Activated CD4-positive, alpha-beta memory T cell treated with anti-CD3 and anti-CD28 coated beads, Interleukin-2, amount 10 ng/mL, durations not matched to agents 7 days and 5 days (primary cell): ENCODE measurements at regions of chr16 and their contacts with region 1.

Region 1: GRCh38 chr16:4253394-4254150 is 11.7 kb upstream of the SRL start:
- DNase-seq: peak; percentile 100
- H3K4me3 Mint-ChIP-seq: peak overlapping the region; percentile 96
- H3K27ac Mint-ChIP-seq: peak overlapping the region; percentile 97
- H3K4me1 Mint-ChIP-seq: peaks cover 11% of the 10 kb centered on the region
- H3K27me3 Mint-ChIP-seq: no peaks in the 10 kb centered on the region

Region 2: DNA sequence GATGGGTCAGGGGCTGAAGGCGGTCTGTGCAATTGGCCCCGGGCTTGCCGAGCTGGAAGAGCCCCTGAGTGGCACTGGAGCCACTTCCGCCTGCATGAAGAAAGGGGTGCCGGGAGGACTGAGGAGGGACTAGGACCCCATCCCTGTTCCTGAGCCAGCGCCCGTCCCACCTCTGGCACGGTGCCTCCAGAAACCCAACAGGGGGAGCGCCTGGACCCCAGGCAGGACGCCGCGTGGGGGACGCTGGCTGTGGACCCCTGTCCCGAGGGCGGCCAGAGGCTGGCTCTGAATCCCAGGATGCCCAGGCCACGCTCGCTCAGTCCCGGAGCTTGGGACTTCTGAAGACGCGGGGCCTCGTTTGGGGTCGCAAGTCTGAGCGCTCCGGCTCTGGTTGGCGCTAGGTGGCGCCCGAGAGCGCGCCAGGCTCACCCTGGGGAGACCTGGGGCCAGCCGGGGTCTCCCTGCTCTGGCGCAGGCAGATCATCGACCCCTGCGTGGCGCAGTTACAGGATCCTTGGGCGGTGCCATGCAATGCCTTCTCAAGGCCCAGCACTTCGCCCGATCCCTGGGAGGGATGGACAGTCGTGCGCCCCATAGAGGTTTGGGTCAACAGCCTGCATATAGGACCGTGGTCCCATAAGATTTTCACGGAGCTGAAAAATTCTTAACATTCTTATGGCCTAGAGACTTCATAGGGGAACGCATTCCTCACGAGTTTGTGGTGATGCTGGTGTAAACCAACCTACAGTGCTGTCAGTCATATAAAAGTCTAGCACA is 314.5 kb before region 1 on chr16:
- CTCF ChIA-PET with region 1: interaction called, 38 read pairs
- POLR2A ChIA-PET with region 1: no interaction called
- DNase-seq: peak; percentile 62
- H3K4me3 Mint-ChIP-seq: no peak overlapping the region
- H3K27ac Mint-ChIP-seq: no peak overlapping the region
- H3K4me1 Mint-ChIP-seq: no peaks in the 10 kb centered on the region
- H3K27me3 Mint-ChIP-seq: no peaks in the 10 kb centered on the region

Region 3: GRCh38 chr16:3983081-3983520 is 270.5 kb before region 1 on chr16:
- CTCF ChIA-PET with region 1: interaction called, 43 read pairs
- POLR2A ChIA-PET with region 1: no interaction called
- DNase-seq: peak; percentile 54
- H3K4me3 Mint-ChIP-seq: no peak overlapping the region
- H3K27ac Mint-ChIP-seq: no peak overlapping the region
- H3K4me1 Mint-ChIP-seq: no peaks in the 10 kb centered on the region
- H3K27me3 Mint-ChIP-seq: no peaks in the 10 kb centered on the region

Region 4: DNA sequence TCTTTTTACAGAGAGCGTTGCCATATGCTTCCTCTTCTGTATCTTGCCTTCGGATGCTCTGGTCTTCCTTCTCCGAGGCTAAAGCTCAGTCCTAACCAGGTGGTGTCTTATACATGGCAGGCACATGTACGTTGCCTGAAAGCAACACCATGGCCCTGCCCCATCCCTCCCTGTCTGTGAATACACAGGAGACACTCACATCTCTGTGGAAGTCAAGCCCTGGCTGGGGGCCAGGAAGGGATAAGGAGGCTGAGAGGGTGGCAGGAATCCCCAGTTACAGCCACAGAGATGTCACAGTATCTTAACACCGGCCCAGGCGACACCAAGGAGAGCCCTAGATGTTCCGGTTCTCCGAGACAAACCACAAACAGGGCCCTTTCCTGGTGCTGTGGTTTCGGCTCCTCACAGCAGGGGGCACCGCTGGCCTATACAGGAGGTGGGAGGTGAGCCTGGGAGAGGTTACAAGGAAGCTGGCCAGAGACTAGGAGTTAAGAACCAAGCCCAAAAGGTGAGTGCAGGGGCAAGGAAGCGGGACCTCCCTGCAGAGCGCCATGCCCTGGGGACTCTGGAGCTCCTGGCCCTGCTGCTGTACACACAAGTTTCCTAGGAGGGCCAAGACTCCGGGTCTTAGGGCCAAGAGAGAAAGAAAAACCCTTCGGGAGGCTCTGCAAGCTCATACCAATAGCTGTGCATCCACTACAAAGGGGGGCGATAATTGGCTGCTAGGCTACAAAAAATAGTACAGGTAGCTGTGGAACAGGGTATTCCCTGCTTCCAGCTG is 53.4 kb before region 1 on chr16:
- CTCF ChIA-PET with region 1: interaction called, 11 read pairs
- POLR2A ChIA-PET with region 1: interaction called, 4 read pairs
- DNase-seq: peak; percentile 31
- H3K4me3 Mint-ChIP-seq: no peak overlapping the region
- H3K27ac Mint-ChIP-seq: no peak overlapping the region
- H3K4me1 Mint-ChIP-seq: peaks cover 4% of the 10 kb centered on the region
- H3K27me3 Mint-ChIP-seq: peaks cover 2% of the 10 kb centered on the region

Region 5: GRCh38 chr16:4288148-4288921 is 34.8 kb after region 1 on chr16:
- CTCF ChIA-PET with region 1: interaction called, 12 read pairs
- POLR2A ChIA-PET with region 1: no interaction called
- DNase-seq: peak; percentile 81
- H3K4me3 Mint-ChIP-seq: no peak overlapping the region
- H3K27ac Mint-ChIP-seq: no peak overlapping the region
- H3K4me1 Mint-ChIP-seq: peaks cover 10% of the 10 kb centered on the region
- H3K27me3 Mint-ChIP-seq: peaks cover 9% of the 10 kb centered on the region

Region 6: GRCh38 chr16:4350787-4351659 is 97.5 kb after region 1 on chr16 and contains the start of gene PAM16:
- CTCF ChIA-PET with region 1: interaction called, 15 read pairs
- POLR2A ChIA-PET with region 1: no interaction called
- DNase-seq: peak; percentile 98
- H3K4me3 Mint-ChIP-seq: peak within 1 kb of the TSS; percentile 93
- H3K27ac Mint-ChIP-seq: peak within 1 kb of the TSS; percentile 85
- H3K4me1 Mint-ChIP-seq: peaks cover 28% of the 10 kb centered on the region
- H3K27me3 Mint-ChIP-seq: no peaks in the 10 kb centered on the region
- total RNA-seq, gene PAM16: 29.7 to 33.9 TPM

Region 7: GRCh38 chr16:4511441-4512082 is 258.0 kb after region 1 on chr16:
- CTCF ChIA-PET with region 1: no interaction called
- POLR2A ChIA-PET with region 1: no interaction called
- DNase-seq: no peak
- H3K4me3 Mint-ChIP-seq: no peak overlapping the region
- H3K27ac Mint-ChIP-seq: peak overlapping the region; percentile 11
- H3K4me1 Mint-ChIP-seq: peaks cover 63% of the 10 kb centered on the region
- H3K27me3 Mint-ChIP-seq: no peaks in the 10 kb centered on the region